Gastrocnemius medialis (tissue), 4 donors: ENCODE measurements at regions of chr6 and their contacts with region 1.

Region 1: GRCh38 chr6:139500977-139501376 is 126.5 kb upstream of the CITED2 start:
- DNase-seq: no peak
- ATAC-seq: no peak
- H3K4me3 ChIP-seq: no peak overlapping the region
- H3K27ac ChIP-seq: no peak overlapping the region
- H3K4me1 ChIP-seq: no peaks in the 10 kb centered on the region
- H3K27me3 ChIP-seq: no peaks in the 10 kb centered on the region
- CTCF ChIP-seq: no peak
- POLR2A ChIP-seq: no peak

Region 2: DNA sequence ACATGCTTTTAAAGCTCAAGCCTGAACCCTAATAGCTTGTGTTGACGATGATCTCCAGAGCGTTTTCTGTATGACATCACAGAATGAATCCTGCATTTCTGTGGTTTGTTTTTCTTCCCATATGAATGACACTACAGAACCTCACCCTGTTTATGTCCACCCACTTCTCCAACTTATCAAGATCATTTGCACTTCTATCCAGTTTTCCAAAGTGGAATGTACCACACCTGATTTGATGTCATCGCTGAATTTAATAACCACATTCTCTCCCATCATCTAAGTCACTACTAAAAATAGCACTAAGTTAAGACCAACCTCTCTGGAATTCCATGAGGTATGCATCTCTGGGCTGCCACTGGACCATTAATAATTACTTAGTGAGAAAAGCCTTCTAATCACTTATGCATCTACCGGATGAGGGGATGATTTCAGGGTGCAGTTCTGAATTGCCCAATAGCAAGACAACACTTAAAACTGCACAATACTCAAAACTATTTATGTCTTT is 93.2 kb before region 1 on chr6:
- in situ Hi-C with region 1: no loop called
- intact Hi-C with region 1: no loop called
- DNase-seq: no peak
- ATAC-seq: no peak
- H3K4me3 ChIP-seq: no peak overlapping the region
- H3K27ac ChIP-seq: no peak overlapping the region
- H3K4me1 ChIP-seq: no peaks in the 10 kb centered on the region
- H3K27me3 ChIP-seq: no peaks in the 10 kb centered on the region
- CTCF ChIP-seq: no peak
- POLR2A ChIP-seq: no peak

Region 3: GRCh38 chr6:139531109-139531790 is 30.3 kb after region 1 on chr6:
- in situ Hi-C with region 1: no loop called
- intact Hi-C with region 1: loop called (anchors 1 kb)
- DNase-seq: no peak
- ATAC-seq: no peak
- H3K4me3 ChIP-seq: no peak overlapping the region
- H3K27ac ChIP-seq: no peak overlapping the region
- H3K4me1 ChIP-seq: peaks cover 6 to 13% of the 10 kb centered on the region in 2 donors
- H3K27me3 ChIP-seq: no peaks in the 10 kb centered on the region
- CTCF ChIP-seq: no peak
- POLR2A ChIP-seq: no peak